ENCODE measurements at regions of chr12 and their contacts with region 1.

Region 1: DNA sequence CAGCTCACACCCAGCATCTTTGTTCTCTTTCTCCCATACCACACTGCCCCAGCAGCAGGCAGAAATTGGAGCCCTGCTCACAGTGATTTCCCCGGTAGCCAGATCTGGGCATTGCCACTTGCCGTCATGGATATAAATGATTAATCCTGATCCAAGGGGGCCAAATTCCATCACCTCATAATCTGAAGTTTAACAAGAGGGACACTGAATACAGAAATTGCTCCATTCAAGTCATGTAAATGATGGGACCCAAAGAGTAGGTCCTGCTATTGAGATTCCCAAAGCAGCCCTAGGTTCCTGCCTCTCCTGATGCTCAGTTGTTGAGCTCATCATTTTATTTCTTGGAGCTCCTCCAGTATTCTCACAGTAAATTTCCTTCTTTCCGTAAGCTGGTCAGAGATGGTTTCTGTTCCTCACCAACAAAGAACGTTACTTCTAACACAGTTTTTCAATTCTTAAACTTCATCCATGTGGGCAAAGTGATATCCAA is 11.7 kb downstream of the ITPR2 start:
- DNase-seq: peak; percentile 69
- H3K4me3 ChIP-seq: peak overlapping the region in 2 of 3 experiments; percentile 19 to 47
- H3K27ac ChIP-seq: peak overlapping the region; percentile 75
- H3K4me1 ChIP-seq: peaks cover 28% of the 10 kb centered on the region
- H3K27me3 ChIP-seq: no peaks in the 10 kb centered on the region
- CTCF ChIP-seq: no peak
- POLR2A ChIP-seq: no peak

Region 2: GRCh38 chr12:26786865-26787514 is 34.3 kb before region 1 on chr12:
- CTCF ChIA-PET with region 1: interaction called, 5 read pairs
- POLR2A ChIA-PET with region 1: no interaction called
- dilution Hi-C with region 1: no loop called
- intact Hi-C with region 1: loop called (anchors 2 kb)
- DNase-seq: peak; percentile 96
- H3K4me3 ChIP-seq: no peak overlapping the region
- H3K27ac ChIP-seq: peak overlapping the region; percentile 85
- H3K4me1 ChIP-seq: peaks cover 39% of the 10 kb centered on the region
- H3K27me3 ChIP-seq: no peaks in the 10 kb centered on the region
- CTCF ChIP-seq: no peak
- POLR2A ChIP-seq: no peak